Activated CD4-positive, alpha-beta T cell treated with anti-CD3 and anti-CD28 coated beads, Interleukin-2, amount 10 ng/mL, durations not matched to agents 24 days and 14 days (primary cell): ENCODE measurements at regions of chr13 and their contacts with region 1.

Region 1: DNA sequence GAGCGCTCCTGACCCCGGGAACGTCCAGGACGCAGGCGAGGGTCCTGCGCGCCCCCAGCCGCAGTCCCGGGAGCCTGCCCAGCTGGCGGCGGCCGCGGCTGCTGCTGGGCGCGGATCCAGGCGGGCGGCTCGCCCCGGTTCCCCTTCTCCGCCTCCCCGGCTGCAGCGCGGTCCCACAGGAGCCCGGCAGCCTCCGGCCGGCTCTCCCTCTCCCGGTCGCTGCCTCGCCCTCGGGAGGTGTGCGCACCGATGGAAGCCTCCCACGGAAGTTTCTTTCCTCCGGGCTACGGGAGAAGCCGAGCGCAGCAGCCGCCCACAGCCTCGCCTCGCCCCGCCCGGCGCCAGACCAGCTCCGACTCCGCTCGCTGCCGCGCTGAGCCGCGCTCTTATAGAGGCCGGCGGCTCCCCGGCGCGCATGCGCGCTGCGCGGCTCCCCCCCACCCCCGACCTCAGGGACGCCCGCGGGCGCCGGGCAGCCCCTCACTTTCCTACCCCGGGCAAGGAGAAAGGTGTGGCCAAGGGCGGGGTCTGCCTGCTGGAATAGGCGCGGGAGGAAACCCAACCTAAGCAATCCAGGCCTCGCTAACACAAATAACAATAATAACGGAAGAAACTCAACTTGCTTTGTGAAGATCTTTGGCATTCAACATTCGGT is at the start of gene SHISA2:
- DNase-seq: peak; percentile 77
- H3K4me3 Mint-ChIP-seq: peak within 1 kb of the TSS; percentile 75
- H3K27ac Mint-ChIP-seq: peak within 1 kb of the TSS; percentile 69
- H3K4me1 Mint-ChIP-seq: peaks cover 26% of the 10 kb centered on the region
- H3K27me3 Mint-ChIP-seq: peaks cover 50% of the 10 kb centered on the region
- total RNA-seq, gene SHISA2: 2.2 and 2.3 TPM in 2 replicates

Region 2: DNA sequence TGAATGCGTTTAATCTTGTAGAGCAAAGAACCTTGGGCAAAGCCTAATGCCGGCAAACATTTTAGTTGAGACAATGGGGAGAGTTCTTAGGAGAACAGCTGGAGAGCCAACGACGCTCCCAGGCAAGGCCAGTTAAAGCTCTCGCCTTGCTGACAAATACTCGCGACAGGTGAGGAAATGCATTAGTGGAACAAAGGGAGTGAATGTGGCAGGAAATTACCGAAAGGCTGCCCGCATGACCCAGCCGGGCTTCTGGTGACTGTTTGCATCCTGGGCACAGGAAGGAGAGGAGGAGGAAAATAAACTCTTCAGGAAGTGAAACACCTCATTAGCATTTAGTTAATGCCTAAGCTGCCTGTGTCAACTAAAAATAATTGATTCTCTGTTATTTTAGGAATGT is 74.6 kb before region 1 on chr13:
- intact Hi-C with region 1: loop called (anchors 10 kb)
- DNase-seq: no peak
- H3K4me3 Mint-ChIP-seq: no peak overlapping the region
- H3K27ac Mint-ChIP-seq: no peak overlapping the region
- H3K4me1 Mint-ChIP-seq: peaks cover 31% of the 10 kb centered on the region
- H3K27me3 Mint-ChIP-seq: no peaks in the 10 kb centered on the region

Region 3: GRCh38 chr13:26011996-26012821 is 39.6 kb before region 1 on chr13:
- intact Hi-C with region 1: loop called (anchors 5 kb)
- DNase-seq: peak; percentile 88
- H3K4me3 Mint-ChIP-seq: peak overlapping the region; percentile 83
- H3K27ac Mint-ChIP-seq: peak overlapping the region; percentile 72
- H3K4me1 Mint-ChIP-seq: peaks cover 16% of the 10 kb centered on the region
- H3K27me3 Mint-ChIP-seq: no peaks in the 10 kb centered on the region

Region 4: DNA sequence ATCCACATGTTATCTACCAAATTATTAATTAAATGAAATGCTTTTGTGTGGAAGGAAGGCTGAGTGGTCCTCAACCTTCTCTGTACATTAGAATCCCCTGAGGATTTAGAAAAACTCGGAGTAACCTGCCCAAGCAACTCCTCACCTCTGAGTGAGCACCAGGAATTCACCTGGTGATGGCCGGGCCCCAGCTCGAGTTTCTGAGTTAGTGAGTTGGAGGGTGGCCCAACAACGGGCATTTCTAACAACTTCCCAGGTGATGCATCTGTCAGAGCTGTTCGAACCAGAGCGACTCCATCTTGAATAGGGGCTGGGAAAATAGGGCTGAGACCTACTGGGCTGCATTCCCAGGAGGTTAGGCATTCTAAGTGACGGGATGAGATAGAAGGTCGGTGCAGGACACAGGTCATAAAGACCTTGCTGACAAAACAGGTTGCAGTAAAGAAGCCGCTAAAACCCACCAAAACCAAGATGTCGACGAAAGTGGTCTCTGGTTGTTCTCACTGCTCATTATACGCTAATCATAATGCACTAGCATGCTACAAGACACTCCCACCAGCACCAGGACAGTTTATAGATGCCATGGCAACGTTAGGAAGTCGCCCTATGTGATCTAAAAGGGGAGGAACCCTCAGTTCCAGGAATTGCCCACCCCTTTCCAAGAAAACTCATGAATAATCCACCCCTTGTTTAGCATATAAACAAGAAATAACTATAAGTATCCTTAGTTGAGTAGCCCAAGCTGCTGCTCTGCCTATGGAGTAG is 44.2 kb after region 1 on chr13:
- intact Hi-C with region 1: no loop called
- DNase-seq: peak; percentile 37
- H3K4me3 Mint-ChIP-seq: no peak overlapping the region
- H3K27ac Mint-ChIP-seq: no peak overlapping the region
- H3K4me1 Mint-ChIP-seq: no peaks in the 10 kb centered on the region
- H3K27me3 Mint-ChIP-seq: peaks cover 26% of the 10 kb centered on the region